Naive thymus-derived CD4-positive, alpha-beta T cell (primary cell): ENCODE measurements at regions of chr19 and their contacts with region 1.

Region 1: DNA sequence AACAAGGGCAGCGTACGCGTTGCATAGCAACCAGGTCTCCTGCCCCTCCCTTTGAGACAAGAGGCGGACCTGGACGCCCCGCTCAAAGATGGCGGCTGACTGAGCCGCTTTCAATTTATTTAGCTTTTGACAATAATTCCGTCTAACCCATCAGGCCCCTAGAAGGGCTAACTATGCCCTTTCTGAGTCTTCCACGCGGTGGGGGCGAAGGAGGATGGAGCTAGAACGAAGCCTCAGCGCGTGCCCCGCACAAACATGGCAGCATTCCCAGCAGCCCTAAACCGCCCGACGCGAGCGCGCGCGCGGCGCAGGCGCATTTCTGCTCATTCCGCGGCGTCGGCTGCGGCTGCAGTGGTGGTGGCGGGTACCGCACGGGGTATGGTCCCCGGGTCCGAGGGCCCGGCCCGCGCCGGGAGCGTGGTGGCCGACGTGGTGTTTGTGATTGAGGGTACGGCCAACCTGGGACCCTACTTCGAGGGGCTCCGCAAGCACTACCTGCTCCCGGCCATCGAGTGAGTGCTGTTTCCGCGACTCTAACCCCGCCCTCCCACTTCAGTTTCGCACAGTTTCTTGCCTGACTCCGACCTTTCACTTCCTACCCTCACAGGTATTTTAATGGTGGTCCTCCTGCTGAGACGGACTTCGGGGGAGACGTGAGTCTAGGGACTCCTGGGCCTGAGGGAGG is at the start of gene MED25:
- DNase-seq: peak; percentile 87 to 96 (median 94)
- ATAC-seq: peak; percentile 65
- H3K4me3 ChIP-seq: peak within 1 kb of the TSS; percentile 91
- H3K4me3 Mint-ChIP-seq: peak within 1 kb of the TSS; percentile 94 to 100 (median 98)
- H3K27ac ChIP-seq: peak within 1 kb of the TSS; percentile 88
- H3K27ac Mint-ChIP-seq: peak within 1 kb of the TSS; percentile 96 to 100 (median 100)
- H3K4me1 ChIP-seq: peaks cover 11 to 17% of the 10 kb centered on the region in 2 donors
- H3K4me1 Mint-ChIP-seq: peaks cover 20 to 51% (median 39%) of the 10 kb centered on the region in 7 donors
- H3K27me3 ChIP-seq: no peaks in the 10 kb centered on the region
- H3K27me3 Mint-ChIP-seq: no peaks in the 10 kb centered on the region
- total RNA-seq, gene MED25: 36.8 to 75.2 (median 55.4) TPM

Region 2: DNA sequence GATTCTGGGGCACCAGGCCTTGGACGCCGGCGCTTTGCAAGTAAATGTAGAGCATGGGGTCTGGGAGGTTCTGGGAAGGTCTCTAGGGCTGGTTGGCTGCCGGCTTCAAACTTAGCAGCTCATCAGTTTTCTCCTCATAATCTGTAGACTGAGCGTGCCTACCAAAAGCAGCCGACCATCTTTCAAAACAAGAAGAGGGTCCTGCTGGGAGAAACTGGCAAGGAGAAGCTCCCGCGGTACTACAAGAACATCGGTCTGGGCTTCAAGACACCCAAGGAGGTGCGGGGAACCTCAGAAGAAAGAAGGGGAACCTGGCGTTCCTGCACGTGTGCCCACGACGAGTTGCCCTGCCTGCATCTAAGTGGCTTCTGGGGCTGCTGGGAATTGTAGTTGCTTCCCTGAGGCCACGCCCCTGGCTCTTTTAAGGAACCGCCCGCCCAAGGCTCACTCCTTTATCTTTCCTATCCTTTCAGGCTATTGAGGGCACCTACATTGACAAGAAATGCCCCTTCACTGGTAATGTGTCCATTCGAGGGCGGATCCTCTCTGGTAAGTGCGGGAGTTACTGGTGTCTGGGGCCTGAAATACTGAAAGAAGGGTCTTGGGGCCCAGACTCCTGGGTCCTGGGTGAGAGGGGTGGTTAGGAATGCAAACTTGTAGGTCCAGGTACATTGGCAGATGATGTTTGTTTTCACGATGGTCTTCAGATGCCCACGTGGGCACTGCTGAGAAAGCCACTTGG is 320.9 kb before region 1 on chr19:
- CTCF ChIA-PET with region 1: no interaction called
- POLR2A ChIA-PET with region 1: interaction called, 3 read pairs
- intact Hi-C with region 1: loop called in 1 of 2 experiments (anchors 2 kb)
- DNase-seq: peak; percentile 55 to 85 (median 77)
- ATAC-seq: peak; percentile 20
- H3K4me3 ChIP-seq: peak overlapping the region; percentile 97
- H3K4me3 Mint-ChIP-seq: peak overlapping the region; percentile 96 to 100 (median 99)
- H3K27ac ChIP-seq: peak overlapping the region; percentile 99
- H3K27ac Mint-ChIP-seq: peak overlapping the region; percentile 91 to 100 (median 98)
- H3K4me1 ChIP-seq: peaks cover 21 to 40% of the 10 kb centered on the region in 2 donors
- H3K4me1 Mint-ChIP-seq: peaks cover 32 to 64% (median 50%) of the 10 kb centered on the region in 7 donors
- H3K27me3 ChIP-seq: no peaks in the 10 kb centered on the region
- H3K27me3 Mint-ChIP-seq: peaks cover 0 to 12% (median 0%) of the 10 kb centered on the region in 5 donors

Region 3: GRCh38 chr19:49507803-49508494 is 310.2 kb before region 1 on chr19:
- CTCF ChIA-PET with region 1: no interaction called
- POLR2A ChIA-PET with region 1: no interaction called
- intact Hi-C with region 1: no loop called
- DNase-seq: no peak
- ATAC-seq: no peak
- H3K4me3 ChIP-seq: no peak overlapping the region
- H3K4me3 Mint-ChIP-seq: no peak overlapping the region
- H3K27ac ChIP-seq: no peak overlapping the region
- H3K27ac Mint-ChIP-seq: peak overlapping the region in 5 of 9 donors; percentile 54 to 76 (median 67)
- H3K4me1 ChIP-seq: peaks cover 12 to 28% of the 10 kb centered on the region in 2 donors
- H3K4me1 Mint-ChIP-seq: peaks cover 17 to 37% (median 32%) of the 10 kb centered on the region in 7 donors
- H3K27me3 ChIP-seq: no peaks in the 10 kb centered on the region
- H3K27me3 Mint-ChIP-seq: peaks cover 0 to 6% (median 0%) of the 10 kb centered on the region in 5 donors

Region 4: DNA sequence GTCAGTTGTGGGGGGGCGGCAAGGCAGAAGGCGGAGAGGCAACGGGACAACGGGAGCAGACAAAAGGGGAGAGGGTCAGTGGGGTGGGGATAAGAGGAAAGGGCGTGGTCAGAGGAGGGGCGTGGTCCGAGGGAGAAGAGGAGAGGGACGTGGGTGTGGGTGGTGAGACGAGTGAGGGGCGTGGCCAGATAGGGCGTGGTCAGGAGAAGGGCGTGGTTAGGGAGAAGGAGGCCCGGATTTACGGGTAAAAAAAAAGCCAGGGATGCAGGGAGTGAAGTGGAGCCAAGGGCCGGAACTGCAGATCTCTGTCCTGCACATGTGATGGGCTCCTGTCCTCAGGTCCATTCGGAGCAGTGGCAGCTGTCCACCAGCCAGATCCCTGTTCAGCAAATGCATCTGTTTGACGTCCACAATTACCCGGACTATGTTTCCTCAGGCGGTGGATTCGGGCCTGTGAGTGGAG is 105.7 kb before region 1 on chr19:
- CTCF ChIA-PET with region 1: no interaction called
- POLR2A ChIA-PET with region 1: interaction called, 5 read pairs
- intact Hi-C with region 1: loop called in 1 of 2 experiments (anchors 1 kb)
- DNase-seq: no peak
- ATAC-seq: no peak
- H3K4me3 ChIP-seq: no peak overlapping the region
- H3K4me3 Mint-ChIP-seq: no peak overlapping the region
- H3K27ac ChIP-seq: no peak overlapping the region
- H3K27ac Mint-ChIP-seq: peak overlapping the region in 1 of 9 donors; percentile 83
- H3K4me1 ChIP-seq: peaks cover 0 to 2% of the 10 kb centered on the region in 2 donors
- H3K4me1 Mint-ChIP-seq: peaks cover 3 to 12% (median 4%) of the 10 kb centered on the region in 7 donors
- H3K27me3 ChIP-seq: no peaks in the 10 kb centered on the region
- H3K27me3 Mint-ChIP-seq: peaks cover 0 to 4% (median 0%) of the 10 kb centered on the region in 5 donors

Region 5: GRCh38 chr19:49869441-49870176 is 51.5 kb after region 1 on chr19:
- CTCF ChIA-PET with region 1: interaction called, 3 read pairs
- POLR2A ChIA-PET with region 1: interaction called, 12 read pairs
- intact Hi-C with region 1: loop called (anchors 1 kb)
- DNase-seq: peak; percentile 83 to 94 (median 87)
- ATAC-seq: peak; percentile 87
- H3K4me3 ChIP-seq: peak overlapping the region; percentile 58
- H3K4me3 Mint-ChIP-seq: peak overlapping the region in 2 of 10 donors; percentile 87
- H3K27ac ChIP-seq: peak overlapping the region; percentile 72
- H3K27ac Mint-ChIP-seq: peak overlapping the region in 5 of 9 donors; percentile 59 to 87 (median 74)
- H3K4me1 ChIP-seq: peaks cover 31 to 38% of the 10 kb centered on the region in 2 donors
- H3K4me1 Mint-ChIP-seq: peaks cover 25 to 51% (median 45%) of the 10 kb centered on the region in 7 donors
- H3K27me3 ChIP-seq: no peaks in the 10 kb centered on the region
- H3K27me3 Mint-ChIP-seq: no peaks in the 10 kb centered on the region

Region 6: DNA sequence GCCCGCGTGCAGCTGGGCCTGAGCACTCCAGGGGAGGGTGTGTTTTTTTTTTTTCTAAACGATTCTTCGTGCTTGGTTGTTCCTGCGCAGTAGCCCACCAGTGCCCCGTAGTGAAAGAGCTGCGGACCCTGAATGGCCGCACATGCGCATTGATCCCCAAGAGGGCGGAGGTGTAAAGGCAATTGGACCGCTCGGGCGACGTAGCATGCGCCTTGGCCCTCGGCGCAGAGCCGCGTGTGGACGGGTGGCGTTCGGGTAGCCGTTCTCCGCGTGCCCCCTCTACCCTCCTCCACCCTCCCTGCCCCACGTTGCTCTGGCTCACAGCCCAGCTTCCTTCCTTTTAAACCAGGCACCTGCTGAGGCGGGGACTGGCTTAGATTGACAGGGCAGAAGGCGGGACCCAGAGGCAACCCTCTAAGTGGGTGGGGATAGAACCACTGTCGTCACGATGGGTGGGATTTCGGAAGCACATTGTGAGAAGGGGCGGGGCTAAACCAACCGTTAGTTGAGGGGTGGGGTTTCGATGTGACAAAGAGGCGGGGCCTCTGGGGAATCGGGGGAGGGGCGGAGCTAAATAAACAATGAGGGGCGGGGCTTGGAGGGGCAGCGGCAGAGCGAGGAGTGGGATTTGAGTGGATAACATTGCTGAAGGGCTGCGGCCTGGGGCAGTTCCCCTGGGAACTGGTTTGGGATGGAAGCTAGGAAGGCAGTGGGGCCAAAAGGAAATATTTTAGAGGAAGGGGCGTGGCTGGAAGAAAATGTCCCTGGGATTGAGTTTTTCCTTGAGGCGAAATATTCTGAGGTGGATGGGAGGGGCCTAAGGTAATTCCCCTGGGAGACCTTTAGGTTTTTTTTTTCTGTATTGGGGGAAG is 111.7 kb after region 1 on chr19:
- CTCF ChIA-PET with region 1: no interaction called
- POLR2A ChIA-PET with region 1: no interaction called
- intact Hi-C with region 1: loop called in 1 of 2 experiments (anchors 1 kb)
- DNase-seq: peak in 8 of 9 donors; percentile 88 to 97 (median 96)
- ATAC-seq: peak; percentile 92
- H3K4me3 ChIP-seq: peak overlapping the region; percentile 100
- H3K4me3 Mint-ChIP-seq: peak overlapping the region; percentile 95 to 100 (median 97)
- H3K27ac ChIP-seq: peak overlapping the region; percentile 99
- H3K27ac Mint-ChIP-seq: peak overlapping the region; percentile 96 to 99 (median 97)
- H3K4me1 ChIP-seq: peaks cover 34 to 35% of the 10 kb centered on the region in 2 donors
- H3K4me1 Mint-ChIP-seq: peaks cover 46 to 76% (median 68%) of the 10 kb centered on the region in 7 donors
- H3K27me3 ChIP-seq: no peaks in the 10 kb centered on the region
- H3K27me3 Mint-ChIP-seq: peaks cover 0 to 3% (median 0%) of the 10 kb centered on the region in 5 donors

Region 7: DNA sequence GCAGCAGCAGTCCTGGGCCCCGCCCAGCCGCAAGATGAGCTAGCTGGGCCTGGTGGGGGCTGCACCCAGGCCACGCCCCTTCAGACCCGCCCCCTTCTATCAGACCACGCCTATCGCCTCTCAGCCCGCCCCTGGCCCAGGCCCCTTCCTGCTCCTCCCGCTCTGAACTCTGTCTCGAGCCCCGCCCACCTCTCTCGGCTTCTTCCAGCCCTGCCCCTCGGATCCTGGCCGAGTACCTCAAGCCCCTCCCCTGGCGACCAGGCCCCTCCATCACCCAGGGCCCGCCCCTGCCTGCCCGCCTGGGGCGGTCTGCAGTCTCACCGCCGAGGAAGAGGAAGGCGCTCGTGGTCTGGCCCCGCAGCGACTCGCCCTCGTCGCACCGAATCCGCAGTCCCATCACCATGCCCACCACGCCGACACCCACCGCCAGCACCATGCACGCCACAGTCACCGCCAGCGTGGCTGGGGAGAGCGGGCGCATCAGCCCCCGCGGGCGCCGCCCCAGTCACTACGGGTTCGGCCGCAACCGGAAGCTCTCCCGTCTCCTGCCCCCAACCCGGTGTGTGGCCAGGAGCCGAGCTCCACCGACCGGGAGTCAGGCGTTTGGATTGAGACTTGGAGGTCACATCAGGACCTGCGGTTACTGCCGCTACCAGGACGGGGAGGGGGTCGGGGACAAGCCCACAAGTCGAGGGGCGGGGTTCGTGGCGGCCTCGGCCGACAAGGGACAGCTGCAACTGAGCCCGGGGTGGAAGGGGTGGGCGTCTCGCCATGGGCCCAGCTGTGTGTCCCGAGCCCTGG is 1549.7 kb after region 1 on chr19:
- CTCF ChIA-PET with region 1: no interaction called
- POLR2A ChIA-PET with region 1: no interaction called
- intact Hi-C with region 1: loop called in 1 of 2 experiments (anchors 5 kb)
- DNase-seq: peak; percentile 84 to 100 (median 90)
- ATAC-seq: peak; percentile 93
- H3K4me3 ChIP-seq: peak overlapping the region; percentile 96
- H3K4me3 Mint-ChIP-seq: peak overlapping the region; percentile 92 to 100 (median 98)
- H3K27ac ChIP-seq: peak overlapping the region; percentile 81
- H3K27ac Mint-ChIP-seq: peak overlapping the region; percentile 79 to 98 (median 95)
- H3K4me1 ChIP-seq: peaks cover 23 to 26% of the 10 kb centered on the region in 2 donors
- H3K4me1 Mint-ChIP-seq: peaks cover 53 to 81% (median 59%) of the 10 kb centered on the region in 7 donors
- H3K27me3 ChIP-seq: no peaks in the 10 kb centered on the region
- H3K27me3 Mint-ChIP-seq: no peaks in the 10 kb centered on the region